CD4-positive, alpha-beta memory T cell (primary cell): ENCODE measurements at regions of chr2 and their contacts with region 1.

Region 1: DNA sequence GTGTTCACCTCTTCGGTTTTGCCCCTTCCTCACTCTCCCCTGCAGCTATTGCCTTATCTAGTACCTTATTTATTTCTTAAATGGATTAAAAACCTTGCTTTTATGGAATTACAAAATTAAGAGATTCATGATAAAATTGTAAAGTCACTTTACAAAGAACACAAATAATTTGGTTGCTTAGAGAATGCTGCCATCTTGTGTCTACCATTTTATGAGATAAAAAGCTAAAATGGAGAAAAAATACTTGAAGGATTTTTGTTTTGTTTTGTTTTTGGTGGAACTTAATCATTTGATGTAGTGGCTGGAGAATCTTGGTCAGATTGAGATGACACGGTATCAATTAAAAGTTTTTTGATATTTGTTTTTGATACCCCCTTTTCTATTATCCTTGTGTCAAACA is 69.6 kb downstream of the R3HDM1 start:
- DNase-seq: peak in 2 of 5 donors; percentile 0 to 1
- H3K4me3 ChIP-seq: no peak overlapping the region
- H3K4me3 Mint-ChIP-seq: no peak overlapping the region
- H3K27ac ChIP-seq: no peak overlapping the region
- H3K27ac Mint-ChIP-seq: no peak overlapping the region
- H3K4me1 ChIP-seq: no peaks in the 10 kb centered on the region
- H3K4me1 Mint-ChIP-seq: peaks cover 0 to 5% (median 3%) of the 10 kb centered on the region in 4 donors
- H3K27me3 ChIP-seq: no peaks in the 10 kb centered on the region
- H3K27me3 Mint-ChIP-seq: no peaks in the 10 kb centered on the region

Region 2: GRCh38 chr2:135473567-135473966 is 127.3 kb before region 1 on chr2:
- CTCF ChIA-PET with region 1: no interaction called
- POLR2A ChIA-PET with region 1: no interaction called
- intact Hi-C with region 1: loop called (anchors 1 kb)
- DNase-seq: peak in 4 of 5 donors; percentile 4 to 25 (median 10)
- H3K4me3 ChIP-seq: no peak overlapping the region
- H3K4me3 Mint-ChIP-seq: no peak overlapping the region
- H3K27ac ChIP-seq: no peak overlapping the region
- H3K27ac Mint-ChIP-seq: no peak overlapping the region
- H3K4me1 ChIP-seq: no peaks in the 10 kb centered on the region
- H3K4me1 Mint-ChIP-seq: no peaks in the 10 kb centered on the region
- H3K27me3 ChIP-seq: no peaks in the 10 kb centered on the region
- H3K27me3 Mint-ChIP-seq: no peaks in the 10 kb centered on the region